Heart right ventricle (tissue), 16 donors: ENCODE measurements at regions of chr1 and their contacts with region 1.

Region 1: DNA sequence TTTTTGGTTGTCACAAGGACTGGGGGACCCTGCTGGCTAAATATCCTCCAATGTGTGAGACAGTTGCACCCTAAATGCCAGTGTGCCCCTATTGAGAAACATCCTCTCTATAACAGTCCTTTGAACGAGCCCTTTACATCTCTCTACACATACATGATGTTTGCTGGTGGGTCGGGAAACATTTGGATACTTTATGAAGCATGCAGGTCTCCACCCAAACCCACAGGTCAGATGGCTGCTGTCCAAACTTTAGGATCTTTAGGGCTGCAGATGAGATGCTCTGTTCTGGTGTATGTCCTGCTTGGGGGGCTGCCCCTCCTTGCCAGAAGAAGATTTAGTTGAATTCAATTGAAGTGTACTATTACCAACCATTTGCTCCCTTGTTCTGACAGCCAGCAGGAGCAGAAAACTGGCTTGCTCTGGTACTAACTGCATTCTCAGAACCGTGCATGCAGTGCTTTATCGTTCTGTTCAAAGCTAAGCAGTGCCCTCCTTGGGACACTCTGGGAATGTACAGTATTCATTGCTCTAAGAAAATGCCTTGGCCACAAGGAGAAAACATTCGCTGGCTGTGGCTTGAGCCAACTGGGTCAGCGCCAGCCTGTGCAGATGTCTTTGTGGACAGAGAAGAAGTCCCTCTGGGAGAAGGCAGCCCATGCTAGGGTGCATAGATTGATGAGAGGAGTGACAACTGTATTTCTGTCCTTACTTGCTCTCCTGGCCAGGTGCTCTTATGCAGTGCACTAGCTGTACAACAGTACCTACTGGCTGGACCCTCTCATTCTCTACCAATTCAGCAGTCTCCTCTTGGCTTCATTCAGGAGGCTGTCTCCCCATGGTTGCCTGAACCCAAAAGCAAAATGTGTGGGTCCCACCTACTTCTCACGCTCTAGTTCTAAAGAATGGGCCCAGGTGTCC is 61.4 kb upstream of the DIRAS3 start:
- DNase-seq: peak; percentile 66 to 72
- ATAC-seq: peak; percentile 83 to 92 (median 90)
- H3K4me3 ChIP-seq: no peak overlapping the region
- H3K27ac ChIP-seq: peak overlapping the region in 1 of 10 donors; percentile 10
- H3K4me1 ChIP-seq: peaks cover 0 to 30% (median 17%) of the 10 kb centered on the region in 9 donors
- H3K27me3 ChIP-seq: no peaks in the 10 kb centered on the region
- CTCF ChIP-seq: peak; percentile 9 to 72 (median 53)

Region 2: GRCh38 chr1:67535474-67535873 is 576.3 kb before region 1 on chr1:
- intact Hi-C with region 1: loop called in 4 of 10 experiments (anchors 5 to 10 kb)
- DNase-seq: peak; percentile 72 to 73
- ATAC-seq: peak in 7 of 8 donors; percentile 72 to 88 (median 79)
- H3K4me3 ChIP-seq: no peak overlapping the region
- H3K27ac ChIP-seq: no peak overlapping the region
- H3K4me1 ChIP-seq: peaks cover 0 to 14% (median 9%) of the 10 kb centered on the region in 9 donors
- H3K27me3 ChIP-seq: no peaks in the 10 kb centered on the region
- CTCF ChIP-seq: peak; percentile 63 to 93 (median 89)

Region 3: DNA sequence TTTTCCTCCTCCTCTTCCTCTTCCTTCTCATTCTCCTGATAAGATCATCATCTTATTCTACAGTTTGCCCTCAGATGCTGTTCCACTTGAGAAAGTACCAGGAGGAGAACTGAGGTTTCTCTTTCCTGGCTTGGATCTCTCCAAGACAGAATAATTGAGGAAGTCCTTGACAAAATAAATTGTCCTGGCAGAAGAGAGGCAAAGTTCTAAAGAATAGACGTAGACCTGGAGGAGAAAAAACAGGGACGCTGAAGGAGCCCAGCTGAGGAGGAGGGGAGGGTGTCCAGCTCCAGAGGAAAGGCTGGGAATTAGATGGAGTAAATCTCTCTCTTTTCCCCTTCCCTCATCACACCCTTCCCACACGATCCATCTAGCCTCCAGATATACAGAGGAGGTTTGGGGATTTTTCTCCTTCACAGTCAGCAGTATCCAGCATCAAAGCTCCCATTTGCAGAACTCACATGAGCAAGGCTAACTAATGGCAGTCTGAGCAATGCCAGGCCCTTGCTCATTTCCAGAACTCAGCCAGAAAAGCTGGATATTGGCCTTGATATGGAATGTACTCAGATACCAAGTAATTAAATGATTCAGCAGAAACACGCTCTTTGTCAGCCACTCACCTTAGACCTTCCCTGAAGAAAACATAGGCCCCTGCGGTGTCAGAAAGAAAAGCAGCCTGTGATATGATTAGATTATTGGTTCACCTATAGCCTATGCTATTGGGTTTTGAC is 273.4 kb before region 1 on chr1:
- intact Hi-C with region 1: loop called in 1 of 10 experiments (anchors 5 kb)
- DNase-seq: no peak
- ATAC-seq: no peak
- H3K4me3 ChIP-seq: no peak overlapping the region
- H3K27ac ChIP-seq: no peak overlapping the region
- H3K4me1 ChIP-seq: peaks cover 0 to 28% (median 16%) of the 10 kb centered on the region in 9 donors
- H3K27me3 ChIP-seq: peaks cover 0 to 27% (median 0%) of the 10 kb centered on the region in 7 donors
- CTCF ChIP-seq: no peak

Region 4: GRCh38 chr1:68442822-68443556 is 331.2 kb after region 1 on chr1:
- intact Hi-C with region 1: loop called in 7 of 10 experiments (anchors 2 to 10 kb)
- DNase-seq: peak in 1 of 2 donors; percentile 32
- ATAC-seq: peak in 5 of 8 donors; percentile 23 to 63 (median 52)
- H3K4me3 ChIP-seq: no peak overlapping the region
- H3K27ac ChIP-seq: no peak overlapping the region
- H3K4me1 ChIP-seq: no peaks in the 10 kb centered on the region
- H3K27me3 ChIP-seq: no peaks in the 10 kb centered on the region
- CTCF ChIP-seq: peak; percentile 19 to 63 (median 56)